Transverse colon (tissue), 4 donors: ENCODE measurements at regions of chr16 and their contacts with region 1.

Region 1: GRCh38 chr16:89289428-89290395 is 72.2 kb downstream of the ZNF778 start:
- DNase-seq: peak; percentile 81
- H3K4me3 ChIP-seq: no peak overlapping the region
- H3K27ac ChIP-seq: no peak overlapping the region
- H3K4me1 ChIP-seq: peaks cover 0 to 11% (median 5%) of the 10 kb centered on the region in 4 donors
- H3K27me3 ChIP-seq: no peaks in the 10 kb centered on the region
- CTCF ChIP-seq: peak; percentile 67 to 83 (median 71)
- EP300 ChIP-seq: no peak
- POLR2A ChIP-seq: no peak

Region 2: GRCh38 chr16:88369447-88370008 is 920.2 kb before region 1 on chr16:
- in situ Hi-C with region 1: no loop called
- intact Hi-C with region 1: loop called (anchors 5 kb)
- DNase-seq: no peak
- H3K4me3 ChIP-seq: no peak overlapping the region
- H3K27ac ChIP-seq: no peak overlapping the region
- H3K4me1 ChIP-seq: no peaks in the 10 kb centered on the region
- H3K27me3 ChIP-seq: no peaks in the 10 kb centered on the region
- CTCF ChIP-seq: no peak
- EP300 ChIP-seq: no peak
- POLR2A ChIP-seq: no peak

Region 3: DNA sequence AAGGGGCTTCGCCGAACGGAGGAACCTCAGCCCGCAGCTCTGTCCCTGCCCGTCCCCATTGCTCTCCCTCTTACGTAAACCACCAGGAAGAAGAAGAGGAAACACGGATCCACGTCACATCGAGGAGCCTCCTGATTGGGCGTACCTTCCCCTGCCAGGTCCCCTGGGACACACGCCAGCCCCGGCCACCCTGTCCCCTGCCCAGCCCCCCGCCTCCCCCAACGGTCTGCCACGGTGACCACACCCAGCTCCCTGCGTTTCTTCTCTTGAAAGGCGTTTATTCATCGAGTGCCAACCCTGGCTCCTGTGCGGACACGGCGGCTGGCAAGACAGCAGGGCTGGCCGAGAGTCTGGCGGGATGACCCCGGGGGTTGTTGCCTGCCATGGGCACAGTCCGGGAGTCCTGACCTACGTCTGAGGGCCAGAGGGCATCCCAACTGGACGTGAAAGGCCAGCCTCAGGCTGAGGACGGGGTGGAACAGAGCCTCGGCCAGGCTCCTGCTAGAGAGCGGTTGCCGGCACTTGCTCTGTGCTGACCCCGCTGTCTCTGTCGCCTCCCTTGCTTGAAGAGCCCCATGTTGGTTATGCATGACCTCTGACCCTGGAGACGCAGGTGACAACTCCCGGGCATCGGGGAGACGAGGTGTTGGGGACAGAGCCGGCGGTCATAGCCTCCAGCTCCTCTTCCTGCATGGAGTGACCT is 236.7 kb before region 1 on chr16:
- in situ Hi-C with region 1: no loop called
- intact Hi-C with region 1: no loop called
- DNase-seq: peak; percentile 92
- H3K4me3 ChIP-seq: peak overlapping the region in 3 of 4 donors; percentile 31 to 50 (median 36)
- H3K27ac ChIP-seq: peak overlapping the region; percentile 60 to 81 (median 76)
- H3K4me1 ChIP-seq: peaks cover 0 to 20% (median 16%) of the 10 kb centered on the region in 4 donors
- H3K27me3 ChIP-seq: peaks cover 34% of the 10 kb centered on the region
- CTCF ChIP-seq: peak in 2 of 5 experiments; percentile 35 to 41
- EP300 ChIP-seq: no peak
- POLR2A ChIP-seq: peak; percentile 88

Region 4: GRCh38 chr16:89319883-89320781 is 30.4 kb after region 1 on chr16:
- in situ Hi-C with region 1: no loop called
- intact Hi-C with region 1: no loop called
- DNase-seq: peak; percentile 38
- H3K4me3 ChIP-seq: peak overlapping the region in 1 of 4 donors; percentile 0
- H3K27ac ChIP-seq: peak overlapping the region; percentile 54 to 74 (median 57)
- H3K4me1 ChIP-seq: peaks cover 41 to 92% (median 76%) of the 10 kb centered on the region in 4 donors
- H3K27me3 ChIP-seq: no peaks in the 10 kb centered on the region
- CTCF ChIP-seq: no peak
- EP300 ChIP-seq: no peak
- POLR2A ChIP-seq: no peak

Region 5: DNA sequence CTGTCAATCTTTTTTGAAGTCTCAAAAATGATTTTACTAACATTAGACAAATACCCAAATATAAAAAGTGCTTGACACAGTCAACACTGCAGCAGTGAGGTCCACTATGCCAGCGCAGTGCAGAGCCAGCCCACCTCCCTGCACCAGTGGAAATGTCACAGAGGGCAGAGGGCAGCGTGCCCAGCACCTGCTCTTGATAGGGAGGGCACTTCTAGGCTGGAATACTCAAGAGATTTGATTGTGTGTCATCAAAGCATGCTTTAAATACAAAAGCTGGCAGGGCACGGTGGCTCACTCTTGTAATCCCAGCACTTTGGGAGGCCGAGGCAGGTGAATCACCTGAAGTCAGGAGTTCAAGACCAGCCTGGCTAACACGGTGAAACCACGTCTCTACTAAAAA is 64.6 kb after region 1 on chr16:
- in situ Hi-C with region 1: no loop called
- intact Hi-C with region 1: loop called (anchors 2 kb)
- DNase-seq: no peak
- H3K4me3 ChIP-seq: no peak overlapping the region
- H3K27ac ChIP-seq: peak overlapping the region; percentile 43 to 77 (median 72)
- H3K4me1 ChIP-seq: peaks cover 19 to 65% (median 47%) of the 10 kb centered on the region in 4 donors
- H3K27me3 ChIP-seq: no peaks in the 10 kb centered on the region
- CTCF ChIP-seq: no peak
- EP300 ChIP-seq: no peak
- POLR2A ChIP-seq: no peak

Region 6: GRCh38 chr16:89490387-89491237 is 200.9 kb after region 1 on chr16 and contains the start of gene ANKRD11:
- in situ Hi-C with region 1: no loop called
- intact Hi-C with region 1: no loop called
- DNase-seq: peak; percentile 99
- H3K4me3 ChIP-seq: peak within 1 kb of the TSS; percentile 93 to 100 (median 99)
- H3K27ac ChIP-seq: peak within 1 kb of the TSS; percentile 98 to 100 (median 100)
- H3K4me1 ChIP-seq: peaks cover 29 to 57% (median 38%) of the 10 kb centered on the region in 4 donors
- H3K27me3 ChIP-seq: no peaks in the 10 kb centered on the region
- CTCF ChIP-seq: no peak
- EP300 ChIP-seq: no peak
- POLR2A ChIP-seq: peak; percentile 88
- total RNA-seq, gene ANKRD11: 109 to 281 (median 142) TPM